Right lobe of liver (tissue), 6 donors: ENCODE measurements at regions of chr10 and their contacts with region 1.

Region 1: GRCh38 chr10:86899670-86900276 is 57.6 kb downstream of the MMRN2 start:
- DNase-seq: peak in 1 of 3 donors; percentile 66
- ATAC-seq: peak; percentile 89 to 93 (median 91)
- H3K4me3 ChIP-seq: no peak overlapping the region
- H3K27ac ChIP-seq: no peak overlapping the region
- H3K4me1 ChIP-seq: peaks cover 0 to 11% (median 2%) of the 10 kb centered on the region in 4 donors
- H3K27me3 ChIP-seq: no peaks in the 10 kb centered on the region
- CTCF ChIP-seq: peak; percentile 71 to 80 (median 79)
- POLR2A ChIP-seq: no peak

Region 2: GRCh38 chr10:86569335-86569734 is 330.4 kb before region 1 on chr10:
- intact Hi-C with region 1: no loop called
- DNase-seq: no peak
- ATAC-seq: no peak
- H3K4me3 ChIP-seq: no peak overlapping the region
- H3K27ac ChIP-seq: no peak overlapping the region
- H3K4me1 ChIP-seq: no peaks in the 10 kb centered on the region
- H3K27me3 ChIP-seq: no peaks in the 10 kb centered on the region
- CTCF ChIP-seq: no peak
- POLR2A ChIP-seq: no peak

Region 3: DNA sequence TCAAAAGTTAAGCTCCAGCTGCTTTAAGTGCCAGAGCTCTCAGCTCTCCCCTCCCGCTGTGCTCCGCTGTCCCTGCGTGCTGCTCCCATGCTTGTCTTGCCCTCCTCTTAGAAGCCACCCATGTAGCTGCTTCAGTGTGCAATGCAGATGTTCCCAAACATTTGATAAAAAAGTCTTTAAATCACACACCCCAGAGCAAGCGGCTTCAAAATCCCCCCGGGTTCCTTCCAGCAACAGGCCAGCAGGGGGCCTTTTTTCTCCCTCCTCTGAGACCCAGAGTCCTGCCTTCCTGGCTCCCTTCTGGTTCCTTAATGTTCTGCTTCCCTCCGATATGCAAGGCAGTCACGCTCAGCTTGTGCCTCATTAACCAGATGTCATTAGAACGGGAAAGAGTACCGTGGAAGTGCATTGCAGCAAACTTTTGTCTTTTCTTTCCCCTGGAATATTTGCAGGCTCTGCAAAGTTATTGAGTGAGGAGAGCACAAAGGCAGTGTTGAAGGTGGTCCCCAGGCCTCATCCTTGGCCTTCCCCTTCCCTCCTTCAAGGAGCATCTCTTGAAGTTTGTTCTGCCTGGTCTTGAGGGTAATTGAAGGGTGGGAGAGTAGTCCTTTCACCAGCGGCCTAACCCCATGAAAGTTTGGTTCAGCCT is 205.9 kb before region 1 on chr10:
- intact Hi-C with region 1: loop called in 1 of 2 experiments (anchors 5 kb)
- DNase-seq: peak in 1 of 3 donors; percentile 44
- ATAC-seq: peak; percentile 54 to 69 (median 66)
- H3K4me3 ChIP-seq: no peak overlapping the region
- H3K27ac ChIP-seq: no peak overlapping the region
- H3K4me1 ChIP-seq: no peaks in the 10 kb centered on the region
- H3K27me3 ChIP-seq: no peaks in the 10 kb centered on the region
- CTCF ChIP-seq: peak; percentile 44 to 59 (median 54)
- POLR2A ChIP-seq: no peak

Region 4: DNA sequence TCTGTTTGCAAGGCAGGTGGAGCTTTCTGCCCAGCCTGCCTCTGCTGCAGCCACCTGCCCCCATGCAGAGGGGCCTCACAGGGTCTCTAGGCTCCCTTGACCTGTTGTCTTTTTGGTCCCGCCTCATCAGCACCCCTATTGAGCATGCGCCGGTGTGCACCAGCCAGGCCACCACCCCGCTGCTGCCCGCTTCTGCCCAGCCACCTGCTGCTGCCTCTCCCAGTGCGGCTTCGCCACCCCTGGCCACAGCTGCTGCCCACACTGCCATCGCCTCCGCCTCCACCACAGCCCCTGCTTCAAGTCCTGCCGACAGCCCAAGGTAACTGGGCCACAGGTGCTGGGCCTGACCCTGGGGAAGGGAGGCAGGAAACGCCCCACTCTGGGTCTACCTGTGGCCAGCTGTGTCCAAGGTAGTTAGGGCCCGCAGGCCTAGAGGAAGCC is 193.4 kb before region 1 on chr10:
- intact Hi-C with region 1: loop called in 1 of 2 experiments (anchors 10 kb)
- DNase-seq: peak in 1 of 3 donors; percentile 50
- ATAC-seq: no peak
- H3K4me3 ChIP-seq: no peak overlapping the region
- H3K27ac ChIP-seq: no peak overlapping the region
- H3K4me1 ChIP-seq: no peaks in the 10 kb centered on the region
- H3K27me3 ChIP-seq: no peaks in the 10 kb centered on the region
- CTCF ChIP-seq: no peak
- POLR2A ChIP-seq: no peak

Region 5: DNA sequence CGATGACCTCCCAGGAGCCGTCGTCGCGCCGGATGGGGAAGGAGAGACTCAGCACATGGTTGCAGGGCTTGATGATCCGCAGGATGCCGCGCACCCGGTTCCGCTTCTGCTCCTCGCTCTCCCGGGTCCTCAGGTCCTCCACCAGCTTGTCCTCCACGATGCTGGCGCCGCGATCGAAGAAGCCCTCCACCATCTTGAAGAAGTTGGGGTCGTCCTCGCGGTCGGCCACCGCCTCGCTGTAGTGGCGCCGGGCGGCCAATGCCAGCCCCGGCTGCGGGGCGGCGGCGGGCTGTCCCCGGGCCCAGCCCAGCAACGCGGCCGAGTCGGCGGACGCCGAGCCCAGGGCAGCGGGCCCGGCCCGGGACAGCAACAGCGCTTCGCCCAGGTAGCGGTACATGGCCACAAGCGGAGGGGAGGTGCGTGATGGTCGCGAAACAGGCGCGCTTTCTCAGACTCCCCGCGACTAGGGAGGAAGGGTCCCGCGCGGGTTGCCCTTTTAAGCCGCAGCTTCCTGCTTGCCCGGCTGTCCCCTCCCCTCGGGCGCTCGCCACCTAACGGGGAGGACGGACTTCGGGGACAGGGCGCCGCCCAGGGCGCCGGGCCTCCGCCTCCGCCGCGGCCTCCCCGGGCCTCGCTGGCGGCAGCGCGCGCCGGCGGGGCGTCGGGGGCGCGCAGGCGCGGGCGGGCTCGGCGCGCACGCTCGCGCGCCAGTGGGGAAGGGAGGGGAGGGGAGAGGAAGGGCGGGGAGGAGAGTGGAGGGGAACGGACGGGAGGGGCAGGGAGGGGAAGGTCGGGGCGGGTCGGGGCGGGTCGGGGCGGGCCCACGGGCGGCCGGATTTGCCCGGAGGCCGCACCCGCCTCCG is 194.8 kb after region 1 on chr10 and contains the starts of genes GLUD1 and SHLD2:
- intact Hi-C with region 1: no loop called
- DNase-seq: peak; percentile 97 to 98 (median 98)
- ATAC-seq: peak; percentile 73 to 85 (median 74)
- H3K4me3 ChIP-seq: peak within 1 kb of the TSS; percentile 74 to 79 (median 77)
- H3K27ac ChIP-seq: peak within 1 kb of the TSS; percentile 84 to 95 (median 92)
- H3K4me1 ChIP-seq: peaks cover 0 to 22% (median 0%) of the 10 kb centered on the region in 4 donors
- H3K27me3 ChIP-seq: no peaks in the 10 kb centered on the region
- CTCF ChIP-seq: no peak
- POLR2A ChIP-seq: peak; percentile 90
- total RNA-seq, gene GLUD1: 272 to 652 (median 433) TPM
- total RNA-seq, gene SHLD2: 22.5 to 33.2 (median 27.2) TPM